PC-3 (cell line): ENCODE measurements at regions of chr4 and their contacts with region 1.

Region 1: GRCh38 chr4:73662709-73663546 is 42.7 kb upstream of the RASSF6 start:
- DNase-seq: peak; percentile 91
- ATAC-seq: peak; percentile 82
- H3K4me3 ChIP-seq: no peak overlapping the region
- H3K27ac ChIP-seq: peak overlapping the region; percentile 75
- H3K4me1 ChIP-seq: peaks cover 40% of the 10 kb centered on the region
- H3K27me3 ChIP-seq: no peaks in the 10 kb centered on the region
- CTCF ChIP-seq: peak; percentile 91

Region 2: GRCh38 chr4:73520821-73521220 is 142.1 kb before region 1 on chr4:
- CTCF ChIA-PET with region 1: no interaction called
- POLR2A ChIA-PET with region 1: no interaction called
- intact Hi-C with region 1: no loop called
- DNase-seq: peak; percentile 48
- ATAC-seq: no peak; the same call in 1 of the 2 replicates
- H3K4me3 ChIP-seq: no peak overlapping the region
- H3K27ac ChIP-seq: no peak overlapping the region; the same call in 1 of the 2 replicates
- H3K4me1 ChIP-seq: peaks cover 12% of the 10 kb centered on the region
- H3K27me3 ChIP-seq: no peaks in the 10 kb centered on the region
- CTCF ChIP-seq: no peak

Region 3: GRCh38 chr4:73704314-73705055 is 41.6 kb after region 1 on chr4:
- CTCF ChIA-PET with region 1: no interaction called
- POLR2A ChIA-PET with region 1: no interaction called
- intact Hi-C with region 1: loop called (anchors 5 kb)
- DNase-seq: peak; percentile 100
- ATAC-seq: peak; percentile 62
- H3K4me3 ChIP-seq: 0 out of 2 replicates have a peak overlapping the region, but pooled peaks have one; percentile 6
- H3K27ac ChIP-seq: peak overlapping the region; percentile 96
- H3K4me1 ChIP-seq: peaks cover 80% of the 10 kb centered on the region
- H3K27me3 ChIP-seq: no peaks in the 10 kb centered on the region
- CTCF ChIP-seq: no peak

Region 4: GRCh38 chr4:73803213-73803612 is 140.3 kb after region 1 on chr4:
- CTCF ChIA-PET with region 1: no interaction called
- POLR2A ChIA-PET with region 1: no interaction called
- intact Hi-C with region 1: loop called (anchors 1 kb)
- DNase-seq: no peak
- ATAC-seq: no peak
- H3K4me3 ChIP-seq: no peak overlapping the region
- H3K27ac ChIP-seq: no peak overlapping the region
- H3K4me1 ChIP-seq: no peaks in the 10 kb centered on the region
- H3K27me3 ChIP-seq: no peaks in the 10 kb centered on the region
- CTCF ChIP-seq: peak; percentile 39; the same call in 1 of the 2 replicates

Region 5: DNA sequence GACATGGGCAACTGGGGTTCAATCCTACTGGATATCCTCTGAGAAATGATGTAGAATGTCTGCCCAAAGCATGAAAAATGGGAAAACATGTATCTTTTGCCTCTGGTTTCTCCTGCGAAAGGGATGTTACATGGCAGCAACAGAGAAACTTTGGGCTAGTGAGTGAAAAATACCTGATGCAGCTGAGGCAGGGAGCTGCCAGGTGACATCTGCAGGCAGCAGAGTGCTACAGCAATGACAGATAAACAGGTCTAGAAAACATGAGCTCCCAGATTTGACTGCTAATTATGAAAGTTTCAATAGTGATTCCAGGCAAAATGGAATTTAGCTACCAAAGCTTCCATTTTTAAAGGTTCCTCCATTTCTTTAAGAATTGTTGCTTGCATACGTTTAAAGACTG is 201.4 kb after region 1 on chr4:
- CTCF ChIA-PET with region 1: interaction called, 7 read pairs
- POLR2A ChIA-PET with region 1: interaction called, 7 read pairs
- intact Hi-C with region 1: loop called (anchors 1 kb)
- DNase-seq: peak; percentile 73
- ATAC-seq: peak; percentile 11; the same call in 1 of the 2 replicates
- H3K4me3 ChIP-seq: peak overlapping the region; percentile 6; the same call in 1 of the 2 replicates
- H3K27ac ChIP-seq: peak overlapping the region; percentile 82
- H3K4me1 ChIP-seq: peaks cover 70% of the 10 kb centered on the region
- H3K27me3 ChIP-seq: no peaks in the 10 kb centered on the region
- CTCF ChIP-seq: peak; percentile 93

Region 6: DNA sequence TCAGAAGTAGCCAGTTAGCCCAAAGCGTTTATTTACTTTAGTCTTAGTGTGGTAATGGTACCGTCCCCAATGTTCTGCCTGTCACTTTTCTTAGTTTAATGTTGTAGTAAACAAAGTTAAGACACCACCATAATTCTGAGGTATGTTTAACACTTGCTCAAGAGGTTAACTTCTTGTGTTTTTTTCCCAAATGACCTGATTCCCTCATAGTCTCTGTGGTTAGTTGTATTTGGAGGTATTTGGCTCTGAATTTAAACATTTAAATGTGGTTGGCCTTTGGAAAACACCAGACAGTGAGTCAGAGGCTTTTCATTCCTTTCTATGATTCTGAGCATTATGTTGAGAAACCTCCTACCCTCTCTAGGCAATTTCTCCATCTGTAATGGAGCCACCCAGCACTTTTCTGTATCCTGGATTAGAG is 254.2 kb after region 1 on chr4:
- CTCF ChIA-PET with region 1: no interaction called
- POLR2A ChIA-PET with region 1: no interaction called
- intact Hi-C with region 1: loop called (anchors 1 kb)
- DNase-seq: peak; percentile 94
- ATAC-seq: peak; percentile 91
- H3K4me3 ChIP-seq: no peak overlapping the region
- H3K27ac ChIP-seq: peak overlapping the region; percentile 75
- H3K4me1 ChIP-seq: peaks cover 33% of the 10 kb centered on the region
- H3K27me3 ChIP-seq: no peaks in the 10 kb centered on the region
- CTCF ChIP-seq: no peak

Region 7: GRCh38 chr4:73922766-73923630 is 260.1 kb after region 1 on chr4:
- CTCF ChIA-PET with region 1: no interaction called
- POLR2A ChIA-PET with region 1: no interaction called
- intact Hi-C with region 1: loop called (anchors 1 kb)
- DNase-seq: peak; percentile 83
- ATAC-seq: peak; percentile 70
- H3K4me3 ChIP-seq: no peak overlapping the region
- H3K27ac ChIP-seq: peak overlapping the region; percentile 59
- H3K4me1 ChIP-seq: peaks cover 26% of the 10 kb centered on the region
- H3K27me3 ChIP-seq: no peaks in the 10 kb centered on the region
- CTCF ChIP-seq: peak; percentile 91

Region 8: DNA sequence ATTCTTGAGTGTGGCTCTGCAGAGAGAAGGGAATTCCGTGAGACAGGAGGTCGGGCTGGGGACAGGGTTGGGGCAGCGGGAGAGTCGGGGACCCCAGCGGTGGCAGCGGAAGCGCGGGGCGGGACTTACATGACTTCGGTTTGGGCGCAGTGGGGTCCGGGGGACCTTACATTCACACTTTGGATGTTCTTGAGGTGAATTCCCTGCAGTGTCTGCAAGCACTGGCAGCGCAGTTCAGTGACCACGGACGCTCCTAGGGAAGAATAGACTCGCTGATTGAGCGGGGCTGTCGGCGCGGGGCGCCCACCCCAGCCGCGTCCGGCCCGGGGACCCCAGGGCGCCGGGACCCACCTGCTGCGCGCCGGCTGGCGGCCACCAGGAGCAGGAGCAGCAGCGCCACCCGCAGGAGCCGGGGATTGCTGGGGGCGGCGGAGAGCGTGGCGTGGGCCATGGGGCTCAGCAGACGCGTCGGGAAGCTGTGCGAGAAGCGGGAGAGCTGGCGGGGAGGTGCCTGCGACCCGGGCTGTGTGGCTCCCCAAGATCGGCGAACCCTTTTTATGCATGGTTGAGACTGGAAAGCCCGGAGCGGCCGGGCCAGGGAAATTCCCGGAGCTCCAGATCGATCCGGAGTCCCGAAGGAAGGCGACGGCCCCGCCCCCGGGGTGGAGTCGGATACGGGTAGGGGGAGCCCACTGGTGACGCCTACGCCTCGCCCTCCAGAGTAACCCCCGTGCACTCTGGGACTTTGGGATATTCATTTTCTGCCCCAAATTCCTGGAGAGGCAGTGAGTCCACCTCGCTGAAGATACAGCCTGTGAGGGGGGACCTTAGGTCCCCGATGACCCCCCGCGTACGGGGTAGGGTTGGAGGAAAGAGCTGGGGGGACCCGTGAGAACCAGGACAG is 375.5 kb after region 1 on chr4 and contains the start of gene CXCL3:
- CTCF ChIA-PET with region 1: no interaction called
- POLR2A ChIA-PET with region 1: no interaction called
- intact Hi-C with region 1: loop called (anchors 5 kb)
- DNase-seq: peak; percentile 78
- ATAC-seq: peak; percentile 86
- H3K4me3 ChIP-seq: peak within 1 kb of the TSS; percentile 78
- H3K27ac ChIP-seq: peak within 1 kb of the TSS; percentile 51
- H3K4me1 ChIP-seq: peaks cover 48% of the 10 kb centered on the region
- H3K27me3 ChIP-seq: no peaks in the 10 kb centered on the region
- CTCF ChIP-seq: peak; percentile 75
- total RNA-seq, gene CXCL3: 25.1 and 28.9 TPM in 2 replicates